Caco-2 (cell line): ENCODE measurements at regions of chr7 and their contacts with region 1.

Region 1: GRCh38 chr7:19969859-19970498 is 196.6 kb upstream of the TMEM196 start:
- DNase-seq: peak; percentile 79 to 83
- H3K4me3 ChIP-seq: no peak overlapping the region
- H3K4me3 Mint-ChIP-seq: peak overlapping the region; percentile 55
- H3K27ac Mint-ChIP-seq: peak overlapping the region; percentile 86
- H3K4me1 ChIP-seq: peaks cover 44% of the 10 kb centered on the region
- H3K4me1 Mint-ChIP-seq: peaks cover 26% of the 10 kb centered on the region
- H3K27me3 ChIP-seq: no peaks in the 10 kb centered on the region
- H3K27me3 Mint-ChIP-seq: no peaks in the 10 kb centered on the region
- CTCF ChIP-seq: no peak

Region 2: GRCh38 chr7:19772841-19773760 is 196.9 kb before region 1 on chr7 and contains the start of gene TMEM196:
- CTCF ChIA-PET with region 1: no interaction called
- POLR2A ChIA-PET with region 1: no interaction called
- intact Hi-C with region 1: loop called (anchors 5 kb)
- DNase-seq: peak; percentile 40 to 50
- H3K4me3 ChIP-seq: peak within 1 kb of the TSS; percentile 18
- H3K4me3 Mint-ChIP-seq: peak within 1 kb of the TSS; percentile 73
- H3K27ac Mint-ChIP-seq: no peak within 1 kb of the TSS
- H3K4me1 ChIP-seq: no peaks in the 10 kb centered on the region
- H3K4me1 Mint-ChIP-seq: no peaks in the 10 kb centered on the region
- H3K27me3 ChIP-seq: no peaks in the 10 kb centered on the region
- H3K27me3 Mint-ChIP-seq: no peaks in the 10 kb centered on the region
- CTCF ChIP-seq: no peak
- total RNA-seq, gene TMEM196: not detected in 2 replicates

Region 3: DNA sequence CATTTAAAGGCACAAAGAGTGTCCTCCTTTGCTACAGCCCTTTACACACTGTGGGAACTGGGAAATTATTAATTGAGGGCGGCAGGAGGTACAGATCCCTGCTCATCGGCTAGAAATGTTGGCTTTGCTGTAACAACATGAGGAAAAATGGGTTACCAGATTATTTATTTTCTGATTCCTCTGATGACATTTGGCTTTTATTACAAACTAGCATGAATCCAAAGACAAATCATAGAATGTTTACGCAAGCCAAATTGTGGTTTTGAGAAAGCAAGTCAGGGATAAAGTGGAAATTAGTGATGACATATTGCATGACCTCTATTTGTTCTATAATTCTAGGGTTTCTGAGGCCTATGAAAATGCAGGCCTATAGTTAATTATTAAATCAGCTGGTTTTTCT is 70.5 kb before region 1 on chr7:
- CTCF ChIA-PET with region 1: no interaction called
- POLR2A ChIA-PET with region 1: no interaction called
- intact Hi-C with region 1: loop called (anchors 1 kb)
- DNase-seq: no peak
- H3K4me3 ChIP-seq: no peak overlapping the region
- H3K4me3 Mint-ChIP-seq: no peak overlapping the region
- H3K27ac Mint-ChIP-seq: no peak overlapping the region
- H3K4me1 ChIP-seq: no peaks in the 10 kb centered on the region; the same call in 1 of the 2 replicates
- H3K4me1 Mint-ChIP-seq: no peaks in the 10 kb centered on the region
- H3K27me3 ChIP-seq: no peaks in the 10 kb centered on the region
- H3K27me3 Mint-ChIP-seq: no peaks in the 10 kb centered on the region
- CTCF ChIP-seq: no peak

Region 4: GRCh38 chr7:19958309-19958896 is 11.6 kb before region 1 on chr7:
- CTCF ChIA-PET with region 1: no interaction called
- POLR2A ChIA-PET with region 1: no interaction called
- intact Hi-C with region 1: no loop called
- DNase-seq: peak in 1 of 2 experiments; percentile 18
- H3K4me3 ChIP-seq: no peak overlapping the region
- H3K4me3 Mint-ChIP-seq: no peak overlapping the region
- H3K27ac Mint-ChIP-seq: no peak overlapping the region
- H3K4me1 ChIP-seq: no peaks in the 10 kb centered on the region
- H3K4me1 Mint-ChIP-seq: peaks cover 6% of the 10 kb centered on the region
- H3K27me3 ChIP-seq: no peaks in the 10 kb centered on the region
- H3K27me3 Mint-ChIP-seq: no peaks in the 10 kb centered on the region
- CTCF ChIP-seq: no peak

Region 5: DNA sequence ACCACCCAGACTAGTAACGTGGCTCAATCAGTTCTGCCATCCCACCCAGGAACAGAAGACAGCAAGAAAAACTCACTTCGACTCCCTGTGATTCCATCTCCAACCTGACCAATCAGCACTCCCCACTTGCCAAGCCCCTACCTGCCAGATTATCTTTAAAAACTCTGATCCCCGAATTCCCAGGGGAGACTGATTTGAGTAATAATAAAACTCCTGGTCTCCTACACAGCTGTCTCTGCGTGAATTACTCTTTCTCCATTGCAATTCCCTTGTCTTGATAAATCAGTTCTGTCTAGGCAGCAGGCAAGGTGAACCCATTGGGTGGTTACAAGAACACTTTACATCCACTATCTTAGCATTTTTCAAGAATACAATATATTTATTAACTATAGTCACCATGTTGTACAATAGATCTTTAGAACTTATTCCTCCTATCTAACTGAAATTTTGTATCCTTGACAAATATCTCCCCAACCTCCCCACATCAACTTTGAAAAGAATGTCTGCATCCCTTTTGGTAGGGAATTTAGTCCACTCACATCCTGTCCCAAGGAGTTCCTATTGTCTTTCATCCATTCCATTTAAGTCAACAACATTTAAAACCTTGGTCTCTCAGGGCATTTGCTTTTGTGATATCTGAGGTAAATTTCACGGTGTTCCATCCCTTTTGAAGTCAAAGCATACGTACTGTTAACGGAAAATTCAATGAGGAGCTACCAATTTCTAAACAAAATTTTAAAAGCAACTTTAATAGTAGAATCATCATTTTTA is 83.5 kb after region 1 on chr7:
- CTCF ChIA-PET with region 1: interaction called, 11 read pairs
- POLR2A ChIA-PET with region 1: interaction called, 3 read pairs
- intact Hi-C with region 1: loop called (anchors 1 kb)
- DNase-seq: no peak
- H3K4me3 ChIP-seq: no peak overlapping the region
- H3K4me3 Mint-ChIP-seq: no peak overlapping the region
- H3K27ac Mint-ChIP-seq: peak overlapping the region; percentile 74
- H3K4me1 ChIP-seq: peaks cover 36% of the 10 kb centered on the region
- H3K4me1 Mint-ChIP-seq: peaks cover 28% of the 10 kb centered on the region
- H3K27me3 ChIP-seq: no peaks in the 10 kb centered on the region
- H3K27me3 Mint-ChIP-seq: no peaks in the 10 kb centered on the region
- CTCF ChIP-seq: no peak

Region 6: GRCh38 chr7:20304376-20304775 is 334.4 kb after region 1 on chr7:
- CTCF ChIA-PET with region 1: no interaction called
- POLR2A ChIA-PET with region 1: no interaction called
- intact Hi-C with region 1: loop called (anchors 1 kb)
- DNase-seq: peak; percentile 70 to 87
- H3K4me3 ChIP-seq: no peak overlapping the region
- H3K4me3 Mint-ChIP-seq: no peak overlapping the region
- H3K27ac Mint-ChIP-seq: peak overlapping the region; percentile 35
- H3K4me1 ChIP-seq: peaks cover 40% of the 10 kb centered on the region
- H3K4me1 Mint-ChIP-seq: peaks cover 45% of the 10 kb centered on the region
- H3K27me3 ChIP-seq: no peaks in the 10 kb centered on the region
- H3K27me3 Mint-ChIP-seq: no peaks in the 10 kb centered on the region
- CTCF ChIP-seq: peak in 1 of 2 experiments; percentile 10